Activated CD4-positive, alpha-beta memory T cell treated with anti-CD3 and anti-CD28 coated beads for 36 hours (primary cell): ENCODE measurements at regions of chr1 and their contacts with region 1.

Region 1: DNA sequence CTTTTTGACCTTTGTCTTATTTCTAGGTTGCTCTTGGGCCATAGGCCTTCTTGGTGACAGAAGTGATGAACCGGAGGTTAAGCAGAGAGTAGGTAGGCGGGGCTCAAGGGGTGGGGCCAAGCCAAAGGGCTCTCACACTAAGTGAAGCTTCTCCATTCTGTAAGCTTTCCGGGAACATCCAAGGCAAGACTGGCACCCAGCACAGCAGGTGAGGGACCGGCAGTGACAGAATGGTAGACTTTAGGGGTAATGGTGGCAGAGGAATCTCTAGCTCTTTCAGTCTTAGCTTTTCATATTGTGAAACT is at the start of gene TNFAIP8L2:
- DNase-seq: peak; percentile 91
- H3K4me3 Mint-ChIP-seq: peak within 1 kb of the TSS; percentile 97
- H3K27ac Mint-ChIP-seq: peak within 1 kb of the TSS; percentile 97
- H3K4me1 Mint-ChIP-seq: peaks cover 38% of the 10 kb centered on the region
- H3K27me3 Mint-ChIP-seq: no peaks in the 10 kb centered on the region
- total RNA-seq, gene TNFAIP8L2: 24.2 to 26.7 TPM

Region 2: DNA sequence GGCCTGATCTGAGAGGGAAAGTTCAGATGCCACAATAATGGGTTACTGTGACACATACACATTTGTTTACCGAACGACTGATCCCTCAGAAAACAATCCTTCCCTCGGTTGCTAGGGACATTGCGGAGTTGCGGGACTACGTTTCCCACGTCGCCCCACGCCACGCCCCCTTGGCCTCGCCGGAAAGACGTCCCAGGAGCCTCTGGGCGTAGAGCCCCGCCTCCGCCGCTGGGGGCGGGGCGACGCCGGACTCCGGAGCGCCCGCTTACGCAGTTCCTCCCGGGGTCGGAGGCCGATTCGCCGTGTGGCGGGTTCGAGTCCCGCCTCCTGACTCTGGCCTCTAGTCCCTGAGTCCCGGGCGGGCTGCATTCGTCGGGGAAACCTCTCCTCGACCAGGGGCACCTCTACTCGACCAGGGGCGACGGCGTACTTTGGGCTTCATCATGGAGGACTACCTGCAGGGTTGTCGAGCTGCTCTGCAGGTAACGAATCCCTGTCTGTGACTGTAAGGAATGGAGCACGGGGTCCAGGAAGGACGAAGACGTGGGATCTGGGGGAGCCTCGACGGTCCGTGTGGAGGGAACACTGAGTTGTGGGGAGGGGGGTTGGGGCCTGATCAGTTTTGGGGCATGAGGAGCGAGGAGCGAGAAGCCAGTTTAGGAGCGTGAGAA is 148.1 kb before region 1 on chr1 and contains the start of gene PRUNE1:
- CTCF ChIA-PET with region 1: interaction called, 6 read pairs
- POLR2A ChIA-PET with region 1: interaction called, 3 read pairs
- intact Hi-C with region 1: loop called (anchors 2 kb)
- DNase-seq: peak; percentile 97
- H3K4me3 Mint-ChIP-seq: peak within 1 kb of the TSS; percentile 99
- H3K27ac Mint-ChIP-seq: peak within 1 kb of the TSS; percentile 97
- H3K4me1 Mint-ChIP-seq: peaks cover 64% of the 10 kb centered on the region
- H3K27me3 Mint-ChIP-seq: no peaks in the 10 kb centered on the region
- total RNA-seq, gene PRUNE1: 12.5 to 17.5 TPM

Region 3: GRCh38 chr1:151059078-151059907 is 97.2 kb before region 1 on chr1 and contains the start of gene CDC42SE1:
- CTCF ChIA-PET with region 1: interaction called, 10 read pairs
- POLR2A ChIA-PET with region 1: interaction called, 10 read pairs
- intact Hi-C with region 1: loop called (anchors 2 kb)
- DNase-seq: peak; percentile 89
- H3K4me3 Mint-ChIP-seq: peak within 1 kb of the TSS; percentile 98
- H3K27ac Mint-ChIP-seq: peak within 1 kb of the TSS; percentile 99
- H3K4me1 Mint-ChIP-seq: peaks cover 56% of the 10 kb centered on the region
- H3K27me3 Mint-ChIP-seq: no peaks in the 10 kb centered on the region
- total RNA-seq, gene CDC42SE1: 135 to 136 TPM

Region 4: GRCh38 chr1:151098126-151098525 is 58.3 kb before region 1 on chr1:
- CTCF ChIA-PET with region 1: interaction called, 298 read pairs
- POLR2A ChIA-PET with region 1: interaction called, 8 read pairs
- intact Hi-C with region 1: loop called (anchors 1 kb)
- DNase-seq: no peak
- H3K4me3 Mint-ChIP-seq: no peak overlapping the region
- H3K27ac Mint-ChIP-seq: no peak overlapping the region
- H3K4me1 Mint-ChIP-seq: no peaks in the 10 kb centered on the region
- H3K27me3 Mint-ChIP-seq: no peaks in the 10 kb centered on the region

Region 5: GRCh38 chr1:151130987-151131586 is 25.4 kb before region 1 on chr1:
- CTCF ChIA-PET with region 1: interaction called, 15 read pairs
- POLR2A ChIA-PET with region 1: interaction called, 7 read pairs
- intact Hi-C with region 1: no loop called
- DNase-seq: peak; percentile 90
- H3K4me3 Mint-ChIP-seq: peak overlapping the region; percentile 72
- H3K27ac Mint-ChIP-seq: no peak overlapping the region
- H3K4me1 Mint-ChIP-seq: peaks cover 13% of the 10 kb centered on the region
- H3K27me3 Mint-ChIP-seq: peaks cover 4% of the 10 kb centered on the region

Region 6: DNA sequence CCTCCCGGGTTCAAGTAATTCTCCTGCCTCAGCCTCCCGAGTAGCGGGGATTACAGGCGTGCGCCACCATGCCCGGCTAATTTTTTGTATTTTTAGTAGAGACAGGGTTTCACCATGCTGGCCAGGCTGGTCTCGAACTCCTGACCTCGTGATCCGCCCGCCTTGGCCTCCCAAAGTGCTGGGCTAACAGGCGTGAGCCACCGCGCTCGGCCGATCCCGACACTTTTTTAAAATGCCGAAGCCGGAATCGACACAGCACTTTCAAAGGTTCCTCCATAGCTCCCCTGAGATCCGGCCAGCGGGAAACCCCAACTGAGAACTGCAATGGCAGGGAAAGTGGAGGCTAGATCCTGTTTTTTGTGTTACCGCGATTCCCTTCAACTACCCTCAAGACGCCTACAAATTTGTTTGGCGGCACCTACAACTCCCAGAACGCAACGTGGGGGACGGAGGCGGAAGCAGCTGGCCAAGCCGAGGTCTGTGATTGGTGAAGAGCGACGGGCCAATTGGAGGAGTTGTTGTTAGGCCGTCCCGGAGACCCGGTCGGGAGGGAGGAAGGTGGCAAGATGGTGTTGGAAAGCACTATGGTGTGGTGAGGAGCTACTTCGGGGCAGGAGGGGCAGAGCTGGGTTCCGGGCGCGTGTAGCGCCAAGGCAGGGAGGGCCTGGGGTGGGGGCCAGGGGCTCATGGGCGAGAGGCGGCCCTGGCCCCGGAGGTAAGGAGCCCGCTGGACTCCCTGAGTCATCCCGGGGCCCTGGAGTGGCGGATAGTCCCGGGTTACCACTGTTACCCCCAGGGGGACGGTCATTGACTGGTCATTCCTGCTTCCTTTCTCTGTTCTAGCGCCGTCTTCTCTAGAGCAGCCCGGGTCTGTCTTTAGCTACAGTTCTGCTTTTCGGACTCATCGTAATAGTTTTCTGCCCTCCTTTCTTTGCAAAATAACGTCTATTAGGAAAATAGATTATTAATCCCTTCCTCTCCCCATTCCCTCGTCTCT is 98.0 kb after region 1 on chr1 and contains the start of gene PSMD4:
- CTCF ChIA-PET with region 1: interaction called, 10 read pairs
- POLR2A ChIA-PET with region 1: interaction called, 5 read pairs
- intact Hi-C with region 1: no loop called
- DNase-seq: peak; percentile 97
- H3K4me3 Mint-ChIP-seq: peak within 1 kb of the TSS; percentile 92
- H3K27ac Mint-ChIP-seq: peak within 1 kb of the TSS; percentile 81
- H3K4me1 Mint-ChIP-seq: peaks cover 25% of the 10 kb centered on the region
- H3K27me3 Mint-ChIP-seq: peaks cover 2% of the 10 kb centered on the region
- total RNA-seq, gene PSMD4: 212 to 227 TPM